ENCODE measurements at regions of chr17 and their contacts with region 1.

Region 1: DNA sequence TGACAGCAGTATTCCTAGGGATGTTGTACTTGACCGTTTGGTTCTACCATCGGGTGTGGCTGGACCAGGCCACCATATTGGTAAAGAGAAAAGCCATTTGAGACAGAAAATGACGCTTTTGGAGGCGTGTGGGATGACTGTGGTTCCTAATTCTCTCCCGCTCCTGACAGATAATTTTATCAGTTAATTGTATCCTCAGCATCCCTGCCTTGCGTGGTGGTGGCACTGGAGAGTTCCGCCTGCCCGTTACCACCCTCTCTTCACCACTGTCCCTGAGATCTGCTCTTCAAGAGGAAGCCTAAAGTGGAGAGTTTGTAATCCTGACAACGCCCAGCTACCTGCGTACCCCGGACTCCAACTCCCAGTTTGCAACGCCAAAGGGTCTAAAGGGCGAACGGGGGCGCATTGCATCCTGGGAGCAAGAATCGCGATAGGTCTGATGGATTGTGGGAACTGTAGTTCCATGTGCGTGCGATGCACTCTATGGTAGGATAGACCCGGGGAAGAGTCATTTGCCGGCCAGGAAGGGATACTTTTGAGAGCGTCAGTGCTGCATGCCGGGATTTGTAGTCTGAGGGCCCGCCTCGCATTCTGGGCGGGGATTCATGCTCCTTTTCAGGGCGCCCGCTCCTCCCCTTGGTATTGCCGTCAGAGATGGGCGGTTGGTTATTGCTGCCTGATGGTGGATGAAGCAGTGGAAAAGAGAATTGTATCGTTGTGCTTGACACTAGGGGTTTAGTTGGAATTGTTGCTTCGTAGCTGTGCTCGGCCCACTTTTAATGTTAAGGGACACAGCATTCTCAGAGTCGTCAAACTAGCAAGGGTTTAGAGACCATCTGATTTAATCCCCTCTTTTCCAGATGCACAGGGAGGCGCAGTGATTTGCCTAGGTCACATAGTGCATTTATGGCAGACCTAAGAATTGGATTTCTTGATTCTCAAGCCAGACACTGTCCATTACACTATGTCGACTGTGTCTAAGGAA is 965 bp upstream of the PHF12 start:
- DNase-seq: peak; percentile 98
- H3K4me3 ChIP-seq: peak overlapping the region in 2 of 3 donors; percentile 57 to 59
- H3K27ac ChIP-seq: peak overlapping the region; percentile 94 to 99 (median 99)
- H3K4me1 ChIP-seq: peaks cover 10 to 24% of the 10 kb centered on the region in 2 donors
- H3K27me3 ChIP-seq: no peaks in the 10 kb centered on the region
- CTCF ChIP-seq: peak in 2 of 6 experiments; percentile 10 to 15
- POLR2A ChIP-seq: peak; percentile 19 to 59

Region 2: DNA sequence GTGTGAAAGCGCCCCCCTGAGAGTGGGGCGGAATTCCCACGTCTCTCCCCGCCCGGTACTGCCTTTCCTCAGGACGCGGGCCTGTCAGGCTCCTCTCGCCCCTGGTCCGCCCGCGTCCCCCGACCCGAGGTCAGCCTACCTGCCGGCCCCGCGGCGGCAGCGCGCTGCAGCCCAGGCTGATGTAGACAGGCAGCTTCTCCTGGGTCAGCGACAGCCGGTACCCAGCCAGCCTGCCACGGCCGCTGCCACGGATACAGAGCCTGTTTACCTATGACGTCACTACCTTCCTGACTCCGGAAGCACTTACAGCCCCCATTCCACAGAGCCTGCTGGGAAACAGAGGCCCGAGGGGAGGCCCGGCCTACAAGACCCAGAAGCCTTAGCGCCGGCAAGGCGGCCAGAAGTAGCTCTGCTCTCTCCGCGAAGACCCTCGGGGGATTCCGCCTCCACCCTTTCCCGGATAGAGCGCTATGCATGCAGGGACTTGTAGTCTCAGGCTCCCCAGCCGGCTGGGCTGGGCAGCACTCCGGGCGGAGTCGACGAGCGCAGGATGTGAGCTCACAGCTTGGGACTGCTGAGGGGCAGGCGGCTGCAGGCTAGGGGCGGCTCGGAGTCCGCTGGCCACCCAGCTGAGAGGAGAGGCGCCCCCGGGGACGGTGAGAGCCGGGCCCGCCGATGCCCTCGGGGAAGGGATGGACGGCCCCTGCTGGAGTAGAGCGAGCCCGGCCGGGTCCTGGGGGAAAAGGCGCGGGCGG is 616.9 kb before region 1 on chr17 and contains the starts of genes IFT20 and TNFAIP1:
- intact Hi-C with region 1: loop called (anchors 10 kb)
- DNase-seq: peak; percentile 99
- H3K4me3 ChIP-seq: peak within 1 kb of the TSS; percentile 80 to 91 (median 91)
- H3K27ac ChIP-seq: peak within 1 kb of the TSS; percentile 83 to 95 (median 91)
- H3K4me1 ChIP-seq: peaks cover 11 to 35% of the 10 kb centered on the region in 2 donors
- H3K27me3 ChIP-seq: no peaks in the 10 kb centered on the region
- CTCF ChIP-seq: peak in 1 of 6 experiments; percentile 27
- POLR2A ChIP-seq: peak; percentile 48 to 91
- total RNA-seq, gene IFT20: 38.5 to 78.0 (median 63.6) TPM
- total RNA-seq, gene TNFAIP1: 28.4 to 36.9 (median 35.8) TPM

Region 3: DNA sequence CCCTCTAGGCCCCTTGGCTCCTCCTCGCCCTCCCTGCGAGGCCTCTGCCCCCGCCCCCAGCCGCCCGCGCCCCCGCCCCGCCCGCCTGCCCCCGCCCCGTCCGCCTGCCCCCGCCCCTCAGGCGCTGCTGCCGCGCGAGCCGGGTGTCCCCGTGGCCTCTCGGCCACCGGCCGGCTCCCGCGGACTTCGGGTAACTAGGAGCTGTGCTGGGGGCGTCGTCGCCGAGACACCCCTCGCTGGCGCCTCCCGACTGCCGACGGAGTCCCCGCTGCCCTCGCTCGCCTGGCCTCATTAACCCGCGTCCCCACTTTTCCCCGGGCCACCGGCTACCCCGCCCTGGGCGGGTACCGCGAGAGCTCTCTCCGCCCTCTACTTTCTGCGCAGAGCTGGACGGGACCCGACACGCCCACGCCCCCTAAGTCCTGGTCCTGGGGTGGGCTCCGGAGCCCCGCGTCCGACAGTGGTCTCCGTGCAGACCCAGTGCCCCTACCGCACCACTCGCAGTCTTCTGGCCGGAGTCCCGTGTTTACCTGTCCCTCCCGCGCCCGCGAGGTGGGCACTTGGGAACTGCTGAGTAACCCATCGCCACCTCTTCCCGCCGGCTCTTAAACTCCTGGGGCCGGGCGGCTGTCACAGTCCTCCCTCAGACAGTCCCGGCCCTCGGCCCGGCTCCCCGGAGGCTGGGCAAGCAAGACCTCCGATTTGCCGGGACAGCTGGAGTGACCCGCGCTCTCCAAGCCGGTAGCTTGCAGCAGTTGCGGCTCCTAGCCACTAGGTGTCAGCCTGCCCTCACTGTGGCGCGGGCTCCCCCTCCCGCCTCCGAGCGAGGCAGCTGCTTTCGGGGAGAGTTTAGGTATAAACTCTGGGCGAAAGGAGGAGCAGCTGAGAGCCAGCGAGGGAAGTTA is 225.8 kb before region 1 on chr17 and contains the start of gene TLCD1:
- intact Hi-C with region 1: loop called (anchors 5 kb)
- DNase-seq: peak; percentile 96
- H3K4me3 ChIP-seq: peak within 1 kb of the TSS in 2 of 3 donors; percentile 34 to 55
- H3K27ac ChIP-seq: peak within 1 kb of the TSS; percentile 92 to 98 (median 94)
- H3K4me1 ChIP-seq: peaks cover 19 to 20% of the 10 kb centered on the region in 2 donors
- H3K27me3 ChIP-seq: no peaks in the 10 kb centered on the region
- CTCF ChIP-seq: peak in 5 of 6 experiments; percentile 99 to 100 (median 100)
- POLR2A ChIP-seq: no peak
- total RNA-seq, gene TLCD1: 1.6 to 21.4 (median 5.1) TPM

Region 4: DNA sequence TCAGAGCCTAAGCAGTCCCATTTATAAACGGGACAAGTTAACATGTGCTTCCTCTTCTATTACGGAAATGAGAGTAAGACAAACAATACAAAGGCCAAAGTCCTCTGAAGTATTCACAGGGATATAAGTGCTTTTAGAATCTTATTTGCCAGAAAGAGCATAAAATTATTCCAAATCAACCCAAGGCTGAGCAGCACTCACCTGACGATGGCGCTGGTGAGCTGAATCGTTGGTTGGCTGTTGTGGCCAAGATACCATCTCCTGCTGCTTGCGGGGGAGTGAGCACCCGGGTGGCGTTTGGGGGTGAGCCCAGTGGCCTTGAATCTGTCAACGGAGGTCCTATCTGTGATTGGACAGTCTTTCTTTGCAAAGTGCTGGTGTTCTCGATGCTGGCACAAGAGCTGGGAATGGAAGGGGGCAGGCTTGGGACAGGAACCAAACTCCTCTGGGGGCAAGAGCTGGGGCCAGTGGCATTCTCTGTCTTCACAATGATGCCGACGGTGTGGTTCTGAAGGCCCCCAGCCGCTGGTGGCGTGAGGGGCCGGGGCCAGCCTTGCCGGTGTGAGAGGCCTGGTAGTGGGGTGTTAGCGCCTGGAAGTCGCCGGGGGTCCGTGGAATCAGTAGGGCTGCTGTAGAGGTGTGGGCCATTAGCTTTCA is 39.9 kb before region 1 on chr17:
- intact Hi-C with region 1: loop called (anchors 5 kb)
- DNase-seq: no peak
- H3K4me3 ChIP-seq: no peak overlapping the region
- H3K27ac ChIP-seq: no peak overlapping the region
- H3K4me1 ChIP-seq: peaks cover 0 to 11% of the 10 kb centered on the region in 2 donors
- H3K27me3 ChIP-seq: no peaks in the 10 kb centered on the region
- CTCF ChIP-seq: no peak
- POLR2A ChIP-seq: no peak